ENCODE measurements at regions of chr1 and their contacts with region 1.

Region 1: GRCh38 chr1:94463765-94464330 is 45.7 kb downstream of the ABCD3 start:
- DNase-seq: no peak
- ATAC-seq: peak; percentile 88

Region 2: DNA sequence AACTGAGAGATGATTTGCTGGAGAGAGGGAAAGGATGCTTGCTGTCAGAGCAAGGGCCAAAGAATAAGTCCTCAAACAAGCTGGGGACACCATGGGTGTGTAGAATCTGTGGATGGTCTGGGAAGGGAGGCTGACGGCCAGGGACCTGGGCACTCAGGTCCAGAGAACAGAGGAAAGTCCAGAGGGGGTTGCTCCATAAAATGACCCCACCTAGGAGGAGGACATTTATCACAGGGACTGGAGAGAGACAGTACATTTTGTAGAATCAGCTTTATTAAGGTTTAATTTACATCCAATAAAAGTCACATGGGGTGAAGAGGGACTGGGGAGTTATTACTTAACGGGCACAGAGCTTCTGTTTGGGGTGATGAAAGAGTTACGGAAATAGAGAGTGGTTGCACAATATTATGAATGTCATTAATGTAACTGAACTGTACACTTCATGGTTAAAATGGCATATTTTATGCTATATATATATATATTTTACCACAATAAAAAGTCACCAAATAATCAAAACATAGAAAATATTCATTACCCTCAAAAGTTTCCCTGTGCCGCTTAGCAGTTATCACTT is 118.6 kb before region 1 on chr1:
- intact Hi-C with region 1: loop called (anchors 10 kb)
- DNase-seq: no peak
- ATAC-seq: no peak

Measured in Right ventricle myocardium superior (tissue), 1 donor.